BJ (cell line): ENCODE measurements at regions of chr17 and their contacts with region 1.

Region 1: DNA sequence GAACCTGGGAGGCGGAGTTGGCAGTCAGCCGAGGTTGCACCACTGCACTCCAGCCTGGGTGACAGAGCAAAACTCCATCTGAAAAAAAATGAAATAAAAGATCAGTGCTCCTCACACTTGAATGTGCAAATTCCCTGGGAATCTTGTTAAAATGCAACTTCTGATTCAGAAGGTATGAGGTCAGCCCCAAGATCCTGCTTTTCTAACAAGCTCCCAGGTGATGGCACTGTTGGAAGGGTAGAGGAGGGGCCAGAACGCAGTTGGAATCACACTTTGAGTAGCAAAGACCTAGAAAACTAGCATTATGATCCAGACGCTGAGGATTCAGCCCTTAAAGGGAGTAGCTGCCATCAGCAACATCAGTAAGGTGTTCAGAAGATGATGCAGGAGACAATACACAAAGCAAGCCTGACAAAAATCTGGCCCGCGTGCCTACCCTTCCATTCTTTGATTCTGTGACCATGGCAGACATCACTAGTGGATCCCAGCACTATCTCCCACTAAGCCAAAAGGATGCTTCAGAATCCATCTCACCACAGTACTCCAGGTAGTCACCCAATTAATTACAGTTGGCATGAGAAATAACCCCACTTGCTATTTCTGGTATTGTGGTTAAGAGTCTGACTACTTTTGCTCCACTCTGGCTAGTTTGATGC is 33.1 kb upstream of the MEIOC start:
- DNase-seq: no peak
- H3K4me3 ChIP-seq: no peak overlapping the region
- H3K27me3 ChIP-seq: no peaks in the 10 kb centered on the region
- CTCF ChIP-seq: no peak

Region 2: DNA sequence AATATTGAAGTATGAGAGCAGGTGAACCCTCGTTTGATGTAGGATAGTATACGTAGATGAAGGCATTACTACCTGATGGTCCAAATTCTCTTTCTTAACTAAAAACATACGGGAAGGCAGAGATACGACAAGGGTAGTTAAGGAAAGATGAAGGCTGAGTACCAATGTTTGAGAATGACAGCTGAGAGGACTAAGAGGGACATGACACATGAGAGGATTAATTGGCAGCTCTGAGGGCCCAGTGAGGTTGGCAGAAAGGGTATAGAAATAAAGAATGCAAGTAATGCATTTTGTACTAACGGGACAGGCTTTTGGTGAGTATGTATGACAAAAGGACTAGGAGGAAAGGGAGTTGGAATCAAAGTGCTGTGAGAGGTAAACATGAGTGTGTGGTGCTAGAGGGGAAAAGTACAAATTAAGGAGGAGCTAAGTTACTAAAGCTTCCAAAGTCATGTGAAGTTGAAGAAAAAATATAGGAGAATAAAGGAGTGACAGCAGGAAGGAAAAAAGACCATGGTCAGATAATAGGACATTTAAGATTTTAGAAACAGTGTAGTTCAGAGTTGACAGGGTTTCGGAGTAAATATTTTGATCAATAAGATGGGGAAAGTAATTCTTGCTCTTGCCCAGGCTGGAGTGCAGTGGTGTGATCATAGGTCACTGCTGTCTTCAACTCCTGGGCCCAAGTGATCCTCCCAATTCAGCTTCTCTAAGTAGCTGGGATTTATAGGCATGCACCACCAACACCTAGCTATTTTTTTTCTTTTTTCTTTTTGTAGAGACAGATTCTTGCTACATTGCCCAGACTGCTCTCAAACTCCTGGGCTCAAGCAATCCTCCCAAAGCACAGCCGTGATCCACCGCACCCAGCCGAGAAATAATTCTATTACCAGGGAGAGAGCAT is 190.7 kb before region 1 on chr17:
- CTCF ChIA-PET with region 1: no interaction called
- POLR2A ChIA-PET with region 1: no interaction called
- DNase-seq: no peak
- H3K4me3 ChIP-seq: no peak overlapping the region
- H3K27me3 ChIP-seq: no peaks in the 10 kb centered on the region
- CTCF ChIP-seq: no peak

Region 3: GRCh38 chr17:44607836-44608690 is 15.1 kb before region 1 on chr17:
- CTCF ChIA-PET with region 1: interaction called, 11 read pairs
- POLR2A ChIA-PET with region 1: no interaction called
- DNase-seq: peak; percentile 35
- H3K4me3 ChIP-seq: no peak overlapping the region
- H3K27me3 ChIP-seq: no peaks in the 10 kb centered on the region
- CTCF ChIP-seq: no peak

Region 4: GRCh38 chr17:45317112-45317928 is 694.1 kb after region 1 on chr17:
- CTCF ChIA-PET with region 1: no interaction called
- POLR2A ChIA-PET with region 1: no interaction called
- DNase-seq: peak; percentile 100
- H3K4me3 ChIP-seq: peak overlapping the region; percentile 40
- H3K27me3 ChIP-seq: no peaks in the 10 kb centered on the region
- CTCF ChIP-seq: 0 out of 2 replicates have a peak, but pooled peaks have one; percentile 16